ENCODE measurements at regions of chr1 and their contacts with region 1.

Region 1: DNA sequence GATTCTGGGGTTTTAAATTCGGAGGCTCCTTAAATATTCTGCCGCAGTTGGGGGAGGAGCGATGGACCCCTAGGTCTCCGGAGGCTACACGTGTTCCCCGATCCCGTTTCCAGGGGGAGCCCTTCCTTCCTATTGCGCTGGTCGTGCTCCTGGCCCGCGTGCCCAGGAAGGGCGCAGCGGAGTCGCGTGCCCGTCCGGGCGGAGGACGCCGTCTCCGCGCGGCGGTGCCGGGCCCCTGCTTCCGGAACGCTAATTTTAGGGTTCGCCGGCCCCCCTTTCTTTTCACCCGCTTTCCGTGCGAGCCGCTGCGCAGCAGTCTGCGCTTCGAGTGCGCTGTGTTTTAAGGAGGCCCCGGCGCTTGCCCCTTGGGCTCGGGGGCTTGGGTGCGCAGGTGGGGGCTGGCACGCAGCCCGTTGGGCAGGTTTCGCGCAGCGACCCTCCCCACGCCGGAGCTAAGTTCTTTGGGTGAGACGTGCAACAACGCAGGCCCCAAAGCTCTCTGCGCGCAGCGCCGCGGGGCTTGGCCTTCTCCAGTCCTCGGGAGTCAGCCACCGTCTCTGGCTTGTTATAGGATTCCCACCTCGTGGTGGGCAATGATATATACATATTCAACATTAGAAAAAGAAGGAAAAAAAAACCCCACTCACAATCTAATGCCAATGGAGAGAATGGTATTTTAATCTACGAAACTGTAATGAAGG is 43.5 kb upstream of the DNAJC6 start:
- DNase-seq: peak; percentile 89
- H3K4me3 ChIP-seq: peak overlapping the region; percentile 50 to 55
- H3K27ac ChIP-seq: peak overlapping the region in 1 of 2 experiments; percentile 81; a peak in 2 of 4 replicates
- H3K4me1 ChIP-seq: peaks cover 5% of the 10 kb centered on the region in 2 experiments; a peak in 2 of 4 replicates
- H3K27me3 ChIP-seq: no peaks in the 10 kb centered on the region
- CTCF ChIP-seq: peak; percentile 42
- EP300 ChIP-seq: no peak
- RAD21 ChIP-seq: peak; percentile 45

Region 2: GRCh38 chr1:65174585-65174984 is 91.2 kb before region 1 on chr1:
- CTCF ChIA-PET with region 1: no interaction called
- POLR2A ChIA-PET with region 1: no interaction called
- DNase-seq: no peak
- H3K4me3 ChIP-seq: no peak overlapping the region
- H3K27ac ChIP-seq: peak overlapping the region in 1 of 2 experiments; percentile 24; a peak in 1 of 4 replicates
- H3K4me1 ChIP-seq: peaks cover 6 to 18% of the 10 kb centered on the region in 2 experiments; a peak in 2 of 4 replicates
- H3K27me3 ChIP-seq: no peaks in the 10 kb centered on the region
- CTCF ChIP-seq: no peak
- EP300 ChIP-seq: no peak
- RAD21 ChIP-seq: no peak

Region 3: GRCh38 chr1:65278376-65279069 is 12.7 kb after region 1 on chr1:
- CTCF ChIA-PET with region 1: interaction called, 24 read pairs
- POLR2A ChIA-PET with region 1: interaction called, 9 read pairs
- DNase-seq: peak; percentile 28
- H3K4me3 ChIP-seq: no peak overlapping the region
- H3K27ac ChIP-seq: peak overlapping the region in 1 of 2 experiments; percentile 64; a peak in 2 of 4 replicates
- H3K4me1 ChIP-seq: peaks cover 0 to 29% of the 10 kb centered on the region in 2 experiments; a peak in 2 of 4 replicates
- H3K27me3 ChIP-seq: no peaks in the 10 kb centered on the region
- CTCF ChIP-seq: no peak
- EP300 ChIP-seq: no peak
- RAD21 ChIP-seq: no peak

Region 4: GRCh38 chr1:65309304-65310077 is 43.7 kb after region 1 on chr1 and contains the start of gene DNAJC6:
- CTCF ChIA-PET with region 1: interaction called, 15 read pairs
- POLR2A ChIA-PET with region 1: interaction called, 4 read pairs
- DNase-seq: peak; percentile 87
- H3K4me3 ChIP-seq: peak within 1 kb of the TSS; percentile 45 to 62
- H3K27ac ChIP-seq: peak within 1 kb of the TSS in 1 of 2 experiments; percentile 77; a peak in 2 of 4 replicates
- H3K4me1 ChIP-seq: peaks cover 0 to 2% of the 10 kb centered on the region in 2 experiments; a peak in 1 of 4 replicates
- H3K27me3 ChIP-seq: no peaks in the 10 kb centered on the region
- CTCF ChIP-seq: no peak
- EP300 ChIP-seq: no peak
- RAD21 ChIP-seq: no peak
- polyA plus RNA-seq, gene DNAJC6: 1.9 and 2.5 TPM in 2 replicates